Activated T-helper 2 cell treated with anti-CD3 and anti-CD28 coated beads, Interferon-gamma antibody, Interleukin-2, Interleukin-4, amounts not matched to agents 10 μg/mL and 5 μg/mL and 100 μg/mL, durations not matched to agents 14 hours and 24 hours and 36 hours (primary cell): ENCODE measurements at regions of chr11 and their contacts with region 1.

Region 1: DNA sequence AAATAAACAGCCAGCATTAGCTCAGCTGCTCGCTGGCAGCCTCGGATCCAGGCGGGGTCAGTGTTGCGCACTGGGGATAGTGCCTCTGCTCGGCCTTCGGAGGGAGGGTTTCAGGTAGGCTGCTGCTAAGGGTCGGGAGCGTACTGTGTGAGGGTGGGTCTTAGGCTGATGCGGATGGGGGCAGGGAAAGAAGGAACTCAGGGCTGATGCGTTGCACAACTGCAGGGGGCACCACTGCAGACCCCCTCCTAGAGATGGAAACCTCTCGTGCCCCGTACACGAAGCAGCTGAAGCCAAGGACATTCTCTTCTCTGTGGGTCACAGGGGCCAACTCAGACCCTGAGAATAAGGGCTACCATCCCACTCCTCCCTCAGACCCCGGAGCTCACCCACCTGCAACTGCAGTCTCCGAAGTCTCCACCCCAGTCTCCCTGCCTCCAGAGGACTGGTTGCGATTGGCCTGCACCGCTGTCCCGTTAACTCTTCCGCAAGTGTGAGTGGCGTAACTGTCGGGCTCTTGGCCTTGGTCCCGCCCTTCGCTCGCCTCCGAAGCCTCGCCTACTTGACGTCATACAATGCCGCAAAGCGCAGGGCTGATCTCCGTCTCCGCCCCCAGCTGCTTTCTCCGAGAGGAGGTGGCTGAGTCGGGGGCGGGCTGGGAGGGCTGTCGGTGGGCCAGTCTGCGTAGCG is at the start of gene KBTBD3:
- DNase-seq: peak; percentile 98
- H3K4me3 Mint-ChIP-seq: peak within 1 kb of the TSS; percentile 92
- H3K27ac Mint-ChIP-seq: peak within 1 kb of the TSS; percentile 90
- H3K4me1 Mint-ChIP-seq: peaks cover 47% of the 10 kb centered on the region
- H3K27me3 Mint-ChIP-seq: no peaks in the 10 kb centered on the region
- total RNA-seq, gene KBTBD3: 6.4 and 8.9 TPM in 2 replicates

Region 2: DNA sequence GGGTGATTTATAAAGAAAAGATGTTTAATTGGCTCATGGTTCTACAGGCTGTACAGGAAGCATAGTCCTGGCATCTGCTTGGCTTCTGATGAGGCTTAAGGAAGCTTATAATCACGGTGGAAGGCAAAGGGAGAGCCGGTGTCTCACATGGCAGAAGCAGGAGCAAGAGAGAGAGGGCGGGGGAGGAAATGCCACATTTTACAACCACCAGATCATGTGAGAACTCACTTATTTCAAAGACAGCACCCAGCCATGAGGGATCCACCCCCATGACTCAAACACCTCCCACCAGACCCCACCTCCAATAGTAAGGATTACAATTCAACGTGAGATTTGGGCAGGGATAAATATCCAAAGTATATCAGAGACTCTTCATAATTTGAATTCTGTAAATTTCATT is 255.7 kb before region 1 on chr11:
- intact Hi-C with region 1: no loop called
- DNase-seq: no peak
- H3K4me3 Mint-ChIP-seq: no peak overlapping the region
- H3K27ac Mint-ChIP-seq: no peak overlapping the region
- H3K4me1 Mint-ChIP-seq: no peaks in the 10 kb centered on the region
- H3K27me3 Mint-ChIP-seq: no peaks in the 10 kb centered on the region

Region 3: DNA sequence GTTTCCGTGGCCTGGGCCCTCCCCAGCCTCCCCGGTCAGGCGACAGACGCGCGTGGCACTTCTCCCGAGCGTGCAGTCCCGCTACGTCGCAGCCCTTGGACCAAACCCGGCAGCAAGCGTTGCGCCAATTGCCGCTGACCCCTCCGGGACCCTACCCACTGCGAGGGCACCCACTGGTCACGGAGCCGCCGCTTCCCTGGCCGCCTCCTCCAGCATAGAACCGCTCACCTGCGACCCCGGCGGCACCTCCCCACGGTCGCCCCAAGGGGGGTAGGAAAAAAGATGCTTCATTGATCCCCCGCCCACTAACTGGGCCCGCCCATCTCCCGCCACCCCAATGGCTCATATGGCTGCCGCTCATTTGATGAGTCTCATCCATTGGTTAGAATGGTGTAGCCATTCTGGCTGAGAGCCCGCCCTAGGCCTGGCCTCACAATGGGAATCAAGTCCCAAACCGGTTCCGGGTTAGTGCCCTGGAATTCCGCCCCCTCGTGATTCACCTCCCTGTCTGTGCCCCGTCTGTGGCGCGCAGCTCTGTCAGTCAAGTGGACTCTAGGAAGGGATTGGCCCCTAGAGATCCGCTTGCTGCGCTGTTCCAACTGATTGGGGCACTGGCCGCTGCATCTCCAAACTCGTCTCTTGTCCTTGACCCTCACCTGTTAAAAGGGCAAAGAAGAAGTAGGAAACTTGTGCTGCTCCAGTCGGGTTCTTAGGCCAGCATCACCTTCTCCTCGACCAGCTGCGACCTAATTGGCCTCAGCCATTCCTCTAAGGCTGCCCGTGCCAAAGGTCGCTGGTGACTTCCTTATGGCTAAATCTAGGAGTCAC is 54.9 kb before region 1 on chr11 and contains the start of gene MSANTD4:
- intact Hi-C with region 1: loop called (anchors 1 kb)
- DNase-seq: peak; percentile 96
- H3K4me3 Mint-ChIP-seq: peak within 1 kb of the TSS; percentile 89
- H3K27ac Mint-ChIP-seq: peak within 1 kb of the TSS; percentile 90
- H3K4me1 Mint-ChIP-seq: peaks cover 36% of the 10 kb centered on the region
- H3K27me3 Mint-ChIP-seq: peaks cover 2% of the 10 kb centered on the region
- total RNA-seq, gene MSANTD4: 17.2 and 22.0 TPM in 2 replicates

Region 4: DNA sequence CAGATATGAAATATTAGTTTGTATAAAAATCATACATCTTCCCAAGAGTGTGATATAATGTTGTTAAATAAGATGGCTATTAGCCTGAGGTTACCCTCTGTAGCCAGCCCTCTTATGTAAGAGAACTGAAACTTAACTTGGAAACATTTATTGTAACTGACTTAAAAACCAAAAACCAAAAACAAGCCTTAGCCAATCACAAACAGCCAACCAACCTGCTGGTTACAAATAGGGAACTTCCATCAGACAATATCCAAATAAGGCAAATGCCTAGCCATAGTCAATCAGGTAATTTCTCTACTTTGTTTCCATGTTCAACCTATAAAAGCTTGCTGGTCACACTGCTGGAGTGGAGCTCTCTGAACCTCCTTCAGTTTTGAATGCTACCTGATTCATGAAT is 14.1 kb before region 1 on chr11:
- intact Hi-C with region 1: loop called (anchors 1 kb)
- DNase-seq: no peak
- H3K4me3 Mint-ChIP-seq: no peak overlapping the region
- H3K27ac Mint-ChIP-seq: no peak overlapping the region
- H3K4me1 Mint-ChIP-seq: peaks cover 13% of the 10 kb centered on the region
- H3K27me3 Mint-ChIP-seq: no peaks in the 10 kb centered on the region

Region 5: GRCh38 chr11:106091480-106092123 is 14.5 kb after region 1 on chr11:
- intact Hi-C with region 1: loop called (anchors 1 kb)
- DNase-seq: no peak
- H3K4me3 Mint-ChIP-seq: no peak overlapping the region
- H3K27ac Mint-ChIP-seq: peak overlapping the region; percentile 57
- H3K4me1 Mint-ChIP-seq: peaks cover 45% of the 10 kb centered on the region
- H3K27me3 Mint-ChIP-seq: no peaks in the 10 kb centered on the region